GM12878 (cell line): ENCODE measurements at regions of chr22 and their contacts with region 1.

Region 1: GRCh38 chr22:33000342-33001280 is 57.6 kb downstream of the SYN3 start:
- DNase-seq: no peak
- ATAC-seq: peak; percentile 79
- H3K4me3 ChIP-seq: no peak overlapping the region
- H3K27ac ChIP-seq: no peak overlapping the region
- H3K4me1 ChIP-seq: no peaks in the 10 kb centered on the region
- H3K27me3 ChIP-seq: no peaks in the 10 kb centered on the region; a peak in 1 of 4 replicates
- CTCF ChIP-seq: peak; percentile 73 to 82 (median 80)
- EP300 ChIP-seq: no peak
- POLR2A ChIP-seq: no peak
- RAD21 ChIP-seq: peak; percentile 68

Region 2: GRCh38 chr22:32528984-32529982 is 471.3 kb before region 1 on chr22:
- CTCF ChIA-PET with region 1: interaction called, 6 read pairs
- POLR2A ChIA-PET with region 1: no interaction called
- RAD21 ChIA-PET with region 1: interaction called, 3 read pairs
- SMC1A ChIA-PET with region 1: no interaction called
- in situ Hi-C with region 1: no loop called
- intact Hi-C with region 1: loop called (anchors 1 kb)
- DNase-seq: peak; percentile 9
- ATAC-seq: peak; percentile 96
- H3K4me3 ChIP-seq: no peak overlapping the region
- H3K27ac ChIP-seq: no peak overlapping the region
- H3K4me1 ChIP-seq: no peaks in the 10 kb centered on the region
- H3K27me3 ChIP-seq: peaks cover 0 to 2% of the 10 kb centered on the region in 2 experiments; a peak in 1 of 4 replicates
- CTCF ChIP-seq: peak; percentile 65 to 84 (median 77)
- EP300 ChIP-seq: no peak
- POLR2A ChIP-seq: no peak
- RAD21 ChIP-seq: peak; percentile 70

Region 3: DNA sequence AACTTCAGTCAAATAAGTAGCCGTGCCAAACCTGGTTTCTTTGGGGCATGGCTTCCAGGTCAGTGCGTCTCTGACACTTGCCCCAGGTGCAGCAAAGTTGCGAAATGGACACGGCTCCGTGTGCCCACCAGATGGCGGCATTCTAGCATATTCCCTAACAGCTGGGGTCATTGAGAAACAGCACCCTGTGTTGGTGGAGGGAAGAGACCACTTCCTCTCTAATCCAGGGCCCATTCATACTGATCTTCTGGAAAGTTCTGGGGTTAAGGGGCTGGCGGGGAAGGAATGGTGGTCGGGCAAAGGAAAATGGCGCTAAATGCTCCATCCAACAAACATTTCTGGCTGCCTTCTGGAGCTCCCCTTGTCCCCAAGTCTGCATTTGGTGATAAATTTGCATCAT is 340.3 kb before region 1 on chr22:
- CTCF ChIA-PET with region 1: interaction called, 16 read pairs
- POLR2A ChIA-PET with region 1: no interaction called
- RAD21 ChIA-PET with region 1: no interaction called
- SMC1A ChIA-PET with region 1: interaction called, 7 read pairs
- in situ Hi-C with region 1: loop called (anchors 10 kb)
- intact Hi-C with region 1: loop called (anchors 1 kb)
- DNase-seq: no peak
- ATAC-seq: peak; percentile 78
- H3K4me3 ChIP-seq: no peak overlapping the region
- H3K27ac ChIP-seq: no peak overlapping the region
- H3K4me1 ChIP-seq: no peaks in the 10 kb centered on the region
- H3K27me3 ChIP-seq: no peaks in the 10 kb centered on the region; a peak in 1 of 4 replicates
- CTCF ChIP-seq: peak; percentile 73 to 78 (median 76)
- EP300 ChIP-seq: no peak
- POLR2A ChIP-seq: no peak
- RAD21 ChIP-seq: peak; percentile 68

Region 4: DNA sequence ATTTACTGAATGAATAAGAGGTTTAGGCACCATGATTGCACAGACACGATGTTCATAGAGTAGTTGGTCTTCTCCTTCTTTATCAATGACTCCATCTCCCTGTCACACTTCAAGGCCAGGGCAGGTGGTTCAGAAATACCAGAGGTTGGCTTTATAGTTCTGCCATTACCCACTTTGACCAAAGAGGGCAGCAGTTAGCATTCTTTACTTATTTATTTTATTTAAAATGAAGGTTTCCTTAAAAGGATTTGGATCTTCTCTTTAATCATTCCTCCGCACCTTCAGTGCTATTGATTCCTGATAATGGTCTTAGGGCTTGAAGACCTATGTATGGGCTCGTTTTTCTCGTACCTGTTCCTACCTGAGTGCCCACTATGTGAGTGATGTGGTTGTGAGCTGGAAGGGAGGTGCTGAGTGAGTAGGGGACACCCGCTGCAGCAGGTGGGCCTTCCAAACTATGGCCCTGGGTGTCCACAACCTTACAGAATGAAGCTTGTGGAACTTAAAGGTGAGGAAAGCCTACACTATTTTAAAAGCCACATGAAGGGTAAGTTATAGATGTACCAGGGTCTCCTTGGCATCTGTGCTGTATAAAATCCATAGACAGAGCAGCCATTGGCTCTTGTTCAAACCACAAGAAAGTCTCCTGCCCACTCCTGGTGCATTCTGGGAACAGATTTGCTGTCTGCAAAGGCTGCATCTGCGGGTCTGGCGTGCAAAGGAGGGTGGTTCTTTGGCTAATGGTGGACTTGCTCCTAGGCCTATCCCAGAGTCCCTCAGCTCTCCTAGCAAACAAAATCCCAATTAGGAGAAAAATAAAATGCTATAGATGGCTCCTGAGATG is 164.1 kb before region 1 on chr22:
- CTCF ChIA-PET with region 1: no interaction called
- POLR2A ChIA-PET with region 1: interaction called, 4 read pairs
- RAD21 ChIA-PET with region 1: no interaction called
- SMC1A ChIA-PET with region 1: no interaction called
- in situ Hi-C with region 1: no loop called
- intact Hi-C with region 1: loop called (anchors 10 kb)
- DNase-seq: no peak
- ATAC-seq: no peak; the same call in 2 of the 3 replicates
- H3K4me3 ChIP-seq: no peak overlapping the region
- H3K27ac ChIP-seq: no peak overlapping the region
- H3K4me1 ChIP-seq: no peaks in the 10 kb centered on the region
- H3K27me3 ChIP-seq: peaks cover 0 to 2% of the 10 kb centered on the region in 2 experiments; a peak in 2 of 4 replicates
- CTCF ChIP-seq: peak; percentile 33 to 49 (median 34); a peak in 5 of 6 replicates
- EP300 ChIP-seq: no peak
- POLR2A ChIP-seq: no peak
- RAD21 ChIP-seq: no peak